ENCODE measurements at regions of chr2 and their contacts with region 1.

Region 1: GRCh38 chr2:71784734-71785473 is 331.5 kb downstream of the DYSF start:
- DNase-seq: peak in 1 of 4 experiments; percentile 19
- ATAC-seq: no peak; the same call in 2 of the 3 replicates
- H3K4me3 ChIP-seq: no peak overlapping the region
- H3K27ac ChIP-seq: no peak overlapping the region
- H3K4me1 ChIP-seq: peaks cover 0 to 4% of the 10 kb centered on the region in 2 experiments; a peak in 1 of 5 replicates
- H3K27me3 ChIP-seq: peaks cover 13 to 32% of the 10 kb centered on the region in 2 experiments; a peak in 4 of 5 replicates
- CTCF ChIP-seq: no peak
- EP300 ChIP-seq: no peak
- POLR2A ChIP-seq: no peak
- RAD21 ChIP-seq: no peak

Region 2: DNA sequence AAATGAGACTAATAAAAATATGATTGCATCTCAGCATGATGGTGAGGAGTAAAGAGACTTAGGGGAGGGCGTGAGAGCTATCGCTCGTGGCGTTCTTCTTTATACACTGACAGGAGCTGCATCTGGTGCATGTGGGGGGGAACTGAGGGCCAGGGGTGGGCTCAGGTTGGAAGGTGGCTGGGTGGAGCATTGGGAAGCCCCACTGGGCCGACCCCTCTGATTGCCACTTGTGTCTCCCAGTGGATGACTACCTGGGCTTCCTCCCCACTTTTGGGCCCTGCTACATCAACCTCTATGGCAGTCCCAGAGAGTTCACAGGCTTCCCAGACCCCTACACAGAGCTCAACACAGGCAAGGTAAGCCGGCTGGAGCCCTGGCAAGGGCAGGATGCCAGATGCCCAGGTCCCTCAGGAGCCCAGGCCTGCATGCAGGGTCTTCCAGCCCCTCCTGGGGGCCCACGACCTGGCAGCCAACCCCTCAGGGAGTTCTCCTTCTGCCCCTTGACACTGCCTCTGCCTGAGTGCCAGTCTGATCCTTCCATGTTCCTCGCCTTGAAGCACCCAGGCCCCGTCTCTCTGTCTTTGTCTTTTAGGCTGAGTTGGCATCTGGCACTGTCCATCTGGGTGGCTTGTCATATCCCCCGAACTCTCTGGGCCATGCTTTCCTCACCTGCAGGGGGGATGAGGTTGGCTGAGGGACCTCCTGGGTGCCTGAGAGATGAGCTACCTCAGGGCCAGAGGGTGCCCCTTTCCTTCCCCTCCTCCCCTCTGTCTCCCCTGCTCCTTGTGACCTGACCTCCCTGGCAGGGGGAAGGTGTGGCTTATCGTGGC is 233.9 kb before region 1 on chr2:
- CTCF ChIA-PET with region 1: no interaction called
- POLR2A ChIA-PET with region 1: no interaction called
- in situ Hi-C with region 1: loop called (anchors 5 kb)
- intact Hi-C with region 1: no loop called
- DNase-seq: no peak
- ATAC-seq: no peak
- H3K4me3 ChIP-seq: no peak overlapping the region
- H3K27ac ChIP-seq: no peak overlapping the region
- H3K4me1 ChIP-seq: 0 out of 5 replicates have a peak, but pooled peaks cover 0 to 3% of the 10 kb centered on the region in 2 experiments
- H3K27me3 ChIP-seq: peaks cover 3 to 25% of the 10 kb centered on the region in 2 experiments; a peak in 2 of 5 replicates
- CTCF ChIP-seq: no peak
- EP300 ChIP-seq: no peak
- POLR2A ChIP-seq: no peak
- RAD21 ChIP-seq: no peak

Region 3: GRCh38 chr2:71711133-71711855 is 73.6 kb before region 1 on chr2:
- CTCF ChIA-PET with region 1: no interaction called
- POLR2A ChIA-PET with region 1: no interaction called
- in situ Hi-C with region 1: no loop called
- intact Hi-C with region 1: no loop called
- DNase-seq: no peak
- ATAC-seq: no peak
- H3K4me3 ChIP-seq: no peak overlapping the region
- H3K27ac ChIP-seq: no peak overlapping the region
- H3K4me1 ChIP-seq: no peaks in the 10 kb centered on the region
- H3K27me3 ChIP-seq: peaks cover 7 to 61% of the 10 kb centered on the region in 2 experiments; a peak in 4 of 5 replicates
- CTCF ChIP-seq: no peak
- EP300 ChIP-seq: no peak
- POLR2A ChIP-seq: no peak
- RAD21 ChIP-seq: no peak